ENCODE measurements at regions of chr1 and their contacts with region 1.

Region 1: GRCh38 chr1:67685067-67685557 is at the start of gene GADD45A:
- DNase-seq: peak; percentile 99
- H3K4me3 ChIP-seq: peak within 1 kb of the TSS; percentile 89
- H3K27ac ChIP-seq: peak within 1 kb of the TSS; percentile 97
- H3K27me3 ChIP-seq: no peaks in the 10 kb centered on the region
- CTCF ChIP-seq: no peak
- polyA plus RNA-seq, gene GADD45A: 33.7 and 41.8 TPM in 2 replicates

Region 2: DNA sequence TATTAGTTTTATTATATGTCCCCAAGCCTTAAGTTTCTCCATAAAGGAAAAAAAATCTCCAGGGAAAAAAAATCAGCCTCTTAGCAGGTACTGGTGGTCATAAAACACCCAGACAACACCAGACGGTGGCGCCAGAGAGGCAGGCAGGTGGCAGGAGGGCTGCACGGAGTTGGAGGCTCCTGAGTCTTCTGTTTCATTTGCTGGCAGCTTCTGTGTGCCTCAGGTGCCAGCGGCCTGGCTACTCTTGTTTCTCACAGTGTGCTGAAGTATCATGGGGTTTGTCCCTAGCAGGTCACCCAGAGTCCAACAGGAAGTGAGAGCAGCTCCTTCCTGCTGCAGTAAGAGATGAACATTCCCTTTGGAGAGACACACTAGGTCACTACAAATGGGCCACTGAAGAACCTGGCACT is 123.4 kb before region 1 on chr1:
- CTCF ChIA-PET with region 1: interaction called, 30 read pairs
- POLR2A ChIA-PET with region 1: interaction called, 26 read pairs
- DNase-seq: peak; percentile 65
- H3K4me3 ChIP-seq: no peak overlapping the region
- H3K27ac ChIP-seq: no peak overlapping the region
- H3K27me3 ChIP-seq: no peaks in the 10 kb centered on the region
- CTCF ChIP-seq: peak; percentile 96

Region 3: DNA sequence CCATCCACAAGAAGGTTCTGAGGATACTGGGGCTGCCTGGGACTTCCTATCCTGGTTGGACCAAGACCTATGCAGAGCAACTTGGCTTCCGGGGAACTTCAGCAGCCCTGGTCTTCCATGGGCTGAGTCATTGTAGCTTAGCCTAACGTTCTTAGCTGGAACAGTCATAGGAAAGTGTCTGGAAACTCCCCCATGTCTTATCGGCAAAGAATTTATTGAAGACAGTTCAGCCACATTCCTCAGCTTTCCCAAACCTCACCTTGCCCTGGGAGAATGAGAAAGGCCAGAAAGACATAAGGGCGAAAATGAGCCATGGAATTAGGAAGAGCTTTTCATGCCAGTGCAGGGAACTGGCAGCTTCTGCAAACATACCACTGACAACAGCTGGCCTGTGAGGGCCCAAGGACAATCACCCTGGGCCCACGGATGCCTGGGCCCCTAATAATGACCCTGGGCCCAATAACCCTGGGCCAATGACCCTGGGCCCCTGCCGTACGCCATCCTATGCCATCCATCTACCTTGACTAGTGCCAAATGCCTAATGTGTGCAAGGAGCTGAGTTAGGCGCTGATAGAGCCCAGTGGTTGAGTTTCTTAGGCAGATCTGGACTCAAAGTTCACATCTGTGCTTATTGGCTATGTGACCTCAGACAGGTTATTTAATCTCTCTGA is 114.5 kb before region 1 on chr1:
- CTCF ChIA-PET with region 1: interaction called, 3 read pairs
- POLR2A ChIA-PET with region 1: interaction called, 43 read pairs
- DNase-seq: peak; percentile 86
- H3K4me3 ChIP-seq: no peak overlapping the region
- H3K27ac ChIP-seq: peak overlapping the region; percentile 89
- H3K27me3 ChIP-seq: no peaks in the 10 kb centered on the region
- CTCF ChIP-seq: no peak

Region 4: GRCh38 chr1:67618285-67619018 is 66.7 kb before region 1 on chr1:
- CTCF ChIA-PET with region 1: interaction called, 4 read pairs
- POLR2A ChIA-PET with region 1: interaction called, 16 read pairs
- DNase-seq: peak; percentile 87
- H3K4me3 ChIP-seq: peak overlapping the region; percentile 3; the same call in 1 of the 2 replicates
- H3K27ac ChIP-seq: peak overlapping the region; percentile 66
- H3K27me3 ChIP-seq: no peaks in the 10 kb centered on the region
- CTCF ChIP-seq: no peak

Region 5: DNA sequence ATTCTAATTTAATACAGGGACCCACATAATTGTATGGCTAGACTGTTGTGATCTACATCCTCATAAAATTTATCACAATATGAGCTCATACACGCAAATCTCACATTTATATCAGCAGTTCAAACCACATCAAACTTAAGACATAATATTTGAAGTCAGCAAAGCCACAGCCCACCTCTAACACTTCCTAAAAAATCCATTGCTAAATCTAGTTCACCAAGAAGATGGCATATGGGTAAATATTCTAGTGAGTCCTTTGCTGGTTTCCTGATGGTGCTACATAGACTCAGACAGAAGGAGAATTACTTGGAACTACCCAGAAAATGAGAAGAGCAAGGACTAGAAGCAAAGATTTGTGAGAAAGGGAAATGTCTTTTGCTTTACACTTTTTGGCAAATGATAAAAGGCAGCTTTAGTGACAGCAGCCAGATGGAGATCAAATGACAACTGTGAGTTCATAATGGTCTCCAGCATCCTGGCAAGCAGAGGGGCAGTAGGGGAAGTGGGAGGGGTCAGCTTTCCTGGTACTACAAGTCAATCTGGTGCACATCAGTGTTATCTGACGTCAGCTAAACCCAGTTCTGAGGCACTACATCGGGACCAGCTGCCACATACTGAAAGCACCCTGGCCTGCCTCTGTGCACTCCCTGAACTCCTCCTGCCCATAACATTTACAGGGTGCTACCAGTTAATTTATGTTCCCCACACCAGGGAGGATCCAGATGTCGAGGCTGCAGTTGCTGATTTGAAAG is 10.7 kb before region 1 on chr1:
- CTCF ChIA-PET with region 1: interaction called, 3 read pairs
- POLR2A ChIA-PET with region 1: interaction called, 29 read pairs
- DNase-seq: no peak
- H3K4me3 ChIP-seq: no peak overlapping the region
- H3K27ac ChIP-seq: no peak overlapping the region
- H3K27me3 ChIP-seq: no peaks in the 10 kb centered on the region
- CTCF ChIP-seq: no peak

Region 6: DNA sequence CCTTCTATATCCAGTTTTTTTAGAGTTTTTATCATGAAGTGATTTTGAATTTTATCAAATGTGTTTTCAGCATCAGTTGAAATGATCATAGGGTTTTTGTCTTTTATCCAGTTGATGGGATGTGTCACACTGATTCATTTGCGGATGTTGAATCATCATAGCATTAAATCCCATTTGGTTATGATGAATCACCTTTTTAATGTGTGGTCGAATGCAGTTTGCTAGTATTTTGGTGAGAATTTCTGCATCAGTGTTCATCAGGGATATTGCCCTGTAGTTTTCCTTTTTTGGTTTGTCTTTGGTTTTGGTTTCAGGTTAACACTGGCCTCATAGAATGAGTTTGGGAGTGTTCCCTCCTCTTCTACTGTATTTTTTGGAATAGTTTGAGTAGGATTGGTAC is 285.0 kb after region 1 on chr1:
- CTCF ChIA-PET with region 1: no interaction called
- POLR2A ChIA-PET with region 1: no interaction called
- DNase-seq: no peak
- H3K4me3 ChIP-seq: no peak overlapping the region
- H3K27ac ChIP-seq: no peak overlapping the region
- H3K27me3 ChIP-seq: no peaks in the 10 kb centered on the region
- CTCF ChIP-seq: no peak

Region 7: GRCh38 chr1:68141071-68142021 is 456.2 kb after region 1 on chr1:
- CTCF ChIA-PET with region 1: no interaction called
- POLR2A ChIA-PET with region 1: no interaction called
- DNase-seq: no peak
- H3K4me3 ChIP-seq: no peak overlapping the region
- H3K27ac ChIP-seq: peak overlapping the region; percentile 58
- H3K27me3 ChIP-seq: no peaks in the 10 kb centered on the region
- CTCF ChIP-seq: no peak